K562 (cell line): ENCODE measurements at regions of chr17 and their contacts with region 1.

Region 1: DNA sequence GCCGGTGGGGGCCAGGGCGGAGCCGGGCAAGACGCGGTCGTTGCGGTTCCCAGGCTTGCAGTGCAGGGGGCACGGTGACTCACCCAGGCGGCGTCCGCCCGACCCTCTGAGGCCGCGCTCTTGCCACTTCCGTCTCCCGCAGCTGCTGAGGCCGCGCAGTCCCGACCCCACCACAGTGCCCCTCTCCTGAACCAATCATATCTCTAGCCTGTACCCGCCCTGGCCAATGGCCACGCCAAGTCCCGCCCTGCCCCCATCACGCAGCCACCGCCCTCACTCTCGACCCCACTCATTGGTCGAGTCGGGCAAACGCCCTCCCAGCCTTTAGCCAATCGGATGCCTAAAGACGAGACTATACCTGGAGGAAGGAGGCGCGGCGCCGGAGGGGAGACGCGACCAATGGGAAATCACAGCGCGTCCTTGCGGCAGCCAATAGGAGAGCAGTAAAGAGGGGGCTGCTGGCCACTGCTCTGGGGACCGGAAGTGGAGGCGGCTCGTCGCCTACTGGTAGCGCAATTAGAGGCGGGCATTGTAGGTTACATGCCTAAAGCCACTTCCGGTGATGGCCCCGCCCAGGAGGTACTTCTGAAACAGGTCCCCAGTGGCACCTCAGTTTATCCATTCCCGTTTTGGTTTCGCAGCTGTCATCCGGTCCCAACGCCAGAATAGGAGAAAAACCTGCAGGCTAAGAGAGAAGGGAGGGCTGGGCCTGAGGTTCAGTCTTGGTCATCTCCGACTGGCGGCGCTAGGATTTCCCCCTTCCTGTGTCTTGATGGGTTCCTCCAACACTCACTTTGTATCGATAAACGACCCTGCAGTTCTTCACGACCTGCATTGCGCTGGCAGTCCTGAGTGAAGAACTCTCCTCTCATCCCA is 3.5 kb upstream of the MTMR4 start:
- DNase-seq: peak; percentile 97 to 100 (median 98)
- ATAC-seq: peak; percentile 92
- H3K4me3 ChIP-seq: peak overlapping the region; percentile 83
- H3K27ac ChIP-seq: peak overlapping the region; percentile 89
- H3K4me1 ChIP-seq: peaks cover 29 to 30% of the 10 kb centered on the region in 2 experiments
- H3K27me3 ChIP-seq: no peaks in the 10 kb centered on the region
- CTCF ChIP-seq: no peak
- EP300 ChIP-seq: no peak; the same call in 1 of the 2 replicates
- POLR2A ChIP-seq: peak; percentile 77
- RAD21 ChIP-seq: no peak

Region 2: GRCh38 chr17:58373923-58374322 is 144.0 kb before region 1 on chr17:
- CTCF ChIA-PET with region 1: no interaction called
- POLR2A ChIA-PET with region 1: no interaction called
- in situ Hi-C with region 1: no loop called
- intact Hi-C with region 1: no loop called
- DNase-seq: no peak
- ATAC-seq: no peak
- H3K4me3 ChIP-seq: no peak overlapping the region
- H3K27ac ChIP-seq: no peak overlapping the region
- H3K4me1 ChIP-seq: peaks cover 0 to 11% of the 10 kb centered on the region in 2 experiments; a peak in 3 of 5 replicates
- H3K27me3 ChIP-seq: no peaks in the 10 kb centered on the region
- CTCF ChIP-seq: no peak
- EP300 ChIP-seq: no peak
- POLR2A ChIP-seq: no peak
- RAD21 ChIP-seq: no peak

Region 3: GRCh38 chr17:58421711-58422110 is 96.3 kb before region 1 on chr17:
- CTCF ChIA-PET with region 1: no interaction called
- POLR2A ChIA-PET with region 1: no interaction called
- in situ Hi-C with region 1: no loop called
- intact Hi-C with region 1: no loop called
- DNase-seq: no peak
- ATAC-seq: no peak
- H3K4me3 ChIP-seq: no peak overlapping the region
- H3K27ac ChIP-seq: no peak overlapping the region
- H3K4me1 ChIP-seq: peaks cover 0 to 2% of the 10 kb centered on the region in 2 experiments; a peak in 1 of 5 replicates
- H3K27me3 ChIP-seq: no peaks in the 10 kb centered on the region
- CTCF ChIP-seq: no peak
- EP300 ChIP-seq: no peak
- POLR2A ChIP-seq: no peak
- RAD21 ChIP-seq: no peak

Region 4: GRCh38 chr17:58463821-58464220 is 54.2 kb before region 1 on chr17:
- CTCF ChIA-PET with region 1: no interaction called
- POLR2A ChIA-PET with region 1: no interaction called
- in situ Hi-C with region 1: no loop called
- intact Hi-C with region 1: no loop called
- DNase-seq: no peak
- ATAC-seq: no peak
- H3K4me3 ChIP-seq: no peak overlapping the region
- H3K27ac ChIP-seq: no peak overlapping the region
- H3K4me1 ChIP-seq: no peaks in the 10 kb centered on the region
- H3K27me3 ChIP-seq: peaks cover 2 to 4% of the 10 kb centered on the region in 2 experiments; a peak in 3 of 5 replicates
- CTCF ChIP-seq: no peak
- EP300 ChIP-seq: no peak
- POLR2A ChIP-seq: no peak
- RAD21 ChIP-seq: no peak

Region 5: GRCh38 chr17:58498170-58498828 is 19.7 kb before region 1 on chr17:
- CTCF ChIA-PET with region 1: no interaction called
- POLR2A ChIA-PET with region 1: interaction called, 10 read pairs
- in situ Hi-C with region 1: no loop called
- intact Hi-C with region 1: no loop called
- DNase-seq: no peak
- ATAC-seq: no peak
- H3K4me3 ChIP-seq: no peak overlapping the region
- H3K27ac ChIP-seq: no peak overlapping the region
- H3K4me1 ChIP-seq: peaks cover 3 to 6% of the 10 kb centered on the region in 2 experiments; a peak in 4 of 5 replicates
- H3K27me3 ChIP-seq: no peaks in the 10 kb centered on the region
- CTCF ChIP-seq: no peak
- EP300 ChIP-seq: no peak
- POLR2A ChIP-seq: no peak
- RAD21 ChIP-seq: no peak

Region 6: GRCh38 chr17:58577642-58578091 is 59.7 kb after region 1 on chr17:
- CTCF ChIA-PET with region 1: no interaction called
- POLR2A ChIA-PET with region 1: no interaction called
- in situ Hi-C with region 1: no loop called
- intact Hi-C with region 1: loop called (anchors 5 kb)
- DNase-seq: peak; percentile 57 to 78 (median 60)
- ATAC-seq: peak; percentile 78
- H3K4me3 ChIP-seq: no peak overlapping the region
- H3K27ac ChIP-seq: no peak overlapping the region
- H3K4me1 ChIP-seq: peaks cover 0 to 8% of the 10 kb centered on the region in 2 experiments; a peak in 3 of 5 replicates
- H3K27me3 ChIP-seq: no peaks in the 10 kb centered on the region
- CTCF ChIP-seq: peak; percentile 63 to 84 (median 71)
- EP300 ChIP-seq: no peak
- POLR2A ChIP-seq: no peak
- RAD21 ChIP-seq: peak; percentile 16 to 50

Region 7: GRCh38 chr17:58624751-58625150 is 106.8 kb after region 1 on chr17:
- CTCF ChIA-PET with region 1: no interaction called
- POLR2A ChIA-PET with region 1: no interaction called
- in situ Hi-C with region 1: no loop called
- intact Hi-C with region 1: no loop called
- DNase-seq: no peak
- ATAC-seq: no peak
- H3K4me3 ChIP-seq: no peak overlapping the region
- H3K27ac ChIP-seq: no peak overlapping the region
- H3K4me1 ChIP-seq: no peaks in the 10 kb centered on the region
- H3K27me3 ChIP-seq: peaks cover 4 to 22% of the 10 kb centered on the region in 2 experiments; a peak in 4 of 5 replicates
- CTCF ChIP-seq: no peak
- EP300 ChIP-seq: no peak
- POLR2A ChIP-seq: no peak
- RAD21 ChIP-seq: no peak

Region 8: GRCh38 chr17:58658804-58659713 is 141.1 kb after region 1 on chr17:
- CTCF ChIA-PET with region 1: no interaction called
- POLR2A ChIA-PET with region 1: interaction called, 11 read pairs
- in situ Hi-C with region 1: no loop called
- intact Hi-C with region 1: loop called (anchors 1 kb)
- DNase-seq: peak; percentile 81 to 96 (median 84)
- ATAC-seq: peak; percentile 97
- H3K4me3 ChIP-seq: peak overlapping the region; percentile 40
- H3K27ac ChIP-seq: peak overlapping the region; percentile 100
- H3K4me1 ChIP-seq: peaks cover 3 to 5% of the 10 kb centered on the region in 2 experiments; a peak in 2 of 5 replicates
- H3K27me3 ChIP-seq: no peaks in the 10 kb centered on the region
- CTCF ChIP-seq: peak in 2 of 3 experiments; percentile 17 to 18; a peak in 2 of 6 replicates
- EP300 ChIP-seq: peak; percentile 89
- POLR2A ChIP-seq: peak; percentile 100
- RAD21 ChIP-seq: peak; percentile 28 to 59; a peak in 3 of 4 replicates

Region 9: DNA sequence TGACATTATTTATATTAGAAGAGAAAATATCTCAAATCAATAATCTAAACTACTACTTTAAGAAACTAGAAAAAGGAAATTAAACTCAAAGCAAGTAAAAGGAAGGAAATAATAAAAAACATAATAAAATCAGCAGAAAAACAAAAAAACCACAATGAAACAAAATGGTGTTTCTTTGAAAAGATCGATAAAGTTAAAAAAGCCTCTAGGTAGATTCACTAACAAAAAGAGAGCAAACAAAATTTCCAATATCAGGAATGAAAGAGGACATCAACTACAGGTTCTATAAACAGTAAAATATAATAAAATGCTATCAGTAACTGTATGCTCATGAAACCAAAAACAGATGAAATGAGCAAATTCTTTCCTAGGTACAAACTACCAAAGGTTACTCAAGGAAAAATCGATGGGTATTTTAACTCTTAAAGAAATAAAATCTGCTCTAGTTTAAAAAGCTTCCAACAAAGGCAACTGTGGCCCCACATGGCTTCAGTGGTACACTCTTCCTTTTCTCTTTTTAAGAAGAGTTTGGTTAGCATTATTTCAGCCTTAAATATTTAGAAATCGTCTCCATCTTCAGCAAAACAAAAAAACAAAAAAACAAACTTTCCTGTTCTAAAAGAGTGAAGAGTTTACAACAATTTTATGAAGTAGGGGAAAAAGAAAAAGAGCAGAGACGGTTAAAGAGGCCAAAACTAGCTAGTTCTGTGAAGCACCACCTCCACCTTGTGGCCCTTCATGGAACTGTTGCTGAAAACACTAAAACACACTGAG is 486.6 kb after region 1 on chr17:
- CTCF ChIA-PET with region 1: interaction called, 28 read pairs
- POLR2A ChIA-PET with region 1: interaction called, 4 read pairs
- in situ Hi-C with region 1: loop called (anchors 5 kb)
- intact Hi-C with region 1: loop called (anchors 1 kb)
- DNase-seq: peak; percentile 52 to 78 (median 60)
- ATAC-seq: peak; percentile 90
- H3K4me3 ChIP-seq: no peak overlapping the region
- H3K27ac ChIP-seq: peak overlapping the region; percentile 24; the same call in 1 of the 3 replicates
- H3K4me1 ChIP-seq: peaks cover 0 to 2% of the 10 kb centered on the region in 2 experiments; a peak in 1 of 5 replicates
- H3K27me3 ChIP-seq: no peaks in the 10 kb centered on the region
- CTCF ChIP-seq: peak; percentile 75 to 89 (median 83)
- EP300 ChIP-seq: no peak
- POLR2A ChIP-seq: no peak
- RAD21 ChIP-seq: peak; percentile 95 to 97